Calu3 (cell line): ENCODE measurements at regions of chr19 and their contacts with region 1.

Region 1: GRCh38 chr19:10478903-10479384 is 24.2 kb downstream of the KEAP1 start:
- DNase-seq: peak; percentile 86
- H3K4me3 Mint-ChIP-seq: peak overlapping the region; percentile 82
- H3K27ac Mint-ChIP-seq: no peak overlapping the region
- H3K4me1 Mint-ChIP-seq: peaks cover 7% of the 10 kb centered on the region
- H3K27me3 Mint-ChIP-seq: no peaks in the 10 kb centered on the region
- CTCF ChIP-seq: peak; percentile 48

Region 2: GRCh38 chr19:10403137-10404021 is 75.6 kb before region 1 on chr19 and contains the start of gene CDC37:
- CTCF ChIA-PET with region 1: no interaction called
- intact Hi-C with region 1: loop called (anchors 2 kb)
- DNase-seq: peak; percentile 95
- H3K4me3 Mint-ChIP-seq: peak within 1 kb of the TSS; percentile 87
- H3K27ac Mint-ChIP-seq: peak within 1 kb of the TSS; percentile 88
- H3K4me1 Mint-ChIP-seq: no peaks in the 10 kb centered on the region
- H3K27me3 Mint-ChIP-seq: peaks cover 30% of the 10 kb centered on the region
- CTCF ChIP-seq: no peak
- total RNA-seq, gene CDC37: 181 and 187 TPM in 2 replicates

Region 3: DNA sequence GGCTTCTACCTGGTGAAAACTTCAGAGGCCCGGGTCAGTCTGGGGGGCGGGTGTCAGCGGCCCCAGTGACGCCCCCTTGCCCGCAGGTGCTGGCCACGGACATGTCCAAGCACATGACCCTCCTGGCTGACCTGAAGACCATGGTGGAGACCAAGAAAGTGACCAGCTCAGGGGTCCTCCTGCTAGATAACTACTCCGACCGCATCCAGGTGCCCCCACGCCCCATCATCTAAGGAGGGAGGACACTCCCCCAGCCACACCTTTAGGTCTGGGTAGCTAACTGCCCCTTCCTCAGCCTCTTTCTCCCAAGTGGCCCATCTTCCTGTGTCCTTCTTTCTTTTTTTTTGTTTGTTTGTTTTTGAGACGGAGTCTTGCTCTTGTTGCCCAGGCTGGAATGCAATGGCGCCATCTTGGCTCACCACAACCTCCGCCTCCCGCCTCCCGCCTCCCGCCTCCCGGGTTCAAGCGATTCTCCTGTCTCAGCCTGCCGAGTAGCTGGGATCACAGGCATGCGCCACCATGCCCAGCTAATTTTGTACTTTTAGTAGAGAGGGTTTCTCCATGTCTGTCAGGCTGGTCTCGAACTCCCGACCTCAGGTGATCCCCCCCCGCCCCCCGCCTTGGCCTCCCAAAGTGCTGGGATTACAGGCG is 17.0 kb before region 1 on chr19:
- CTCF ChIA-PET with region 1: no interaction called
- intact Hi-C with region 1: no loop called
- DNase-seq: no peak
- H3K4me3 Mint-ChIP-seq: no peak overlapping the region
- H3K27ac Mint-ChIP-seq: no peak overlapping the region
- H3K4me1 Mint-ChIP-seq: no peaks in the 10 kb centered on the region
- H3K27me3 Mint-ChIP-seq: no peaks in the 10 kb centered on the region
- CTCF ChIP-seq: no peak